Heart left ventricle (tissue), 16 donors: ENCODE measurements at regions of chr17 and their contacts with region 1.

Region 1: DNA sequence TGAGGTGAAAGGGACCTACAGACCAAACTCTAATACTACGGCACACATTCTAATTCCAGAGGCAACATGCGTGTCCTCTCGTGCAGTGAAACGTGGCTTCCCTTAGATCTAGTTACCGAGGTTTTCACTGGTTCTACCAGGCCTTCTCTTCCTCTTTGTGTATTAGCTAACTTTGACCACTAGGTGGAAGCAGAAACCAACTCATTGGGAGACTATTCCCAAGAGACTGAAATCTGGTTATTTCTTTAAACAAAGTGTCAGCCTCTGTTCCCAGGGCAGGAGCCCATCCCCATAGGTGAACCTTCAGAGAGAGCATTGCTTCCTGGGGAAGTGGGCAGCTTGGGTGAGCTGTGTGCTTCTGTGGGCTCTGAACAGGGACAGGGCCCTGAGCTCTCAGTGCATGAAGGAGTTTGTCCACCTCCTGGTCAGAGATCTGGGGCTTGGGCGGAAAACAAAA is 19.7 kb upstream of the RCVRN start:
- DNase-seq: no peak
- ATAC-seq: peak in 3 of 4 donors; percentile 44 to 58 (median 48)
- H3K4me3 ChIP-seq: no peak overlapping the region
- H3K27ac ChIP-seq: no peak overlapping the region
- H3K4me1 ChIP-seq: peaks cover 0 to 8% (median 0%) of the 10 kb centered on the region in 12 donors
- H3K27me3 ChIP-seq: no peaks in the 10 kb centered on the region
- CTCF ChIP-seq: peak; percentile 71 to 93 (median 82)
- POLR2A ChIP-seq: no peak

Region 2: DNA sequence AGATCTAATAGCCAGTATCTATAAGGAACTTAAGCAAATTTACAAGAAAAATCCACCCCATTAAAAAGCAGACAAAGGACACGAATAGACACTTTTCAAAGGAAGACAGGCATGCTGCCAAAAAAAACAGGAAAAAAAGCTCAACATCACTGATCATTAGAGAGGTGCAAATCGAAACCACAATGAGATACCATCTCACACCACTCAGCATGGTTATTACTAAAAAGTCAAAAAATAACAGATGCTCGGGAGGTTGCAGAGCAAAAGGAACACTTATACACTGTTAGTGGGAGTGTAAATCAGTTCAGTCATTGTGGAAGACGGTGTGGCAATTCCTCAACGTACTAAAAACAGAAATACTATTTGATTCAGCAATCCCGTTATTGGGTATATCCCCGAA is 358.7 kb before region 1 on chr17:
- intact Hi-C with region 1: no loop called
- DNase-seq: no peak
- ATAC-seq: no peak
- H3K4me3 ChIP-seq: peak overlapping the region in 1 of 12 donors; percentile 16
- H3K27ac ChIP-seq: no peak overlapping the region
- H3K4me1 ChIP-seq: peaks cover 0 to 14% (median 0%) of the 10 kb centered on the region in 12 donors
- H3K27me3 ChIP-seq: no peaks in the 10 kb centered on the region
- CTCF ChIP-seq: no peak
- POLR2A ChIP-seq: no peak

Region 3: GRCh38 chr17:9824094-9824493 is 100.7 kb before region 1 on chr17:
- intact Hi-C with region 1: no loop called
- DNase-seq: no peak
- ATAC-seq: no peak
- H3K4me3 ChIP-seq: no peak overlapping the region
- H3K27ac ChIP-seq: no peak overlapping the region
- H3K4me1 ChIP-seq: no peaks in the 10 kb centered on the region
- H3K27me3 ChIP-seq: peaks cover 0 to 55% (median 0%) of the 10 kb centered on the region in 9 donors
- CTCF ChIP-seq: no peak
- POLR2A ChIP-seq: no peak

Region 4: DNA sequence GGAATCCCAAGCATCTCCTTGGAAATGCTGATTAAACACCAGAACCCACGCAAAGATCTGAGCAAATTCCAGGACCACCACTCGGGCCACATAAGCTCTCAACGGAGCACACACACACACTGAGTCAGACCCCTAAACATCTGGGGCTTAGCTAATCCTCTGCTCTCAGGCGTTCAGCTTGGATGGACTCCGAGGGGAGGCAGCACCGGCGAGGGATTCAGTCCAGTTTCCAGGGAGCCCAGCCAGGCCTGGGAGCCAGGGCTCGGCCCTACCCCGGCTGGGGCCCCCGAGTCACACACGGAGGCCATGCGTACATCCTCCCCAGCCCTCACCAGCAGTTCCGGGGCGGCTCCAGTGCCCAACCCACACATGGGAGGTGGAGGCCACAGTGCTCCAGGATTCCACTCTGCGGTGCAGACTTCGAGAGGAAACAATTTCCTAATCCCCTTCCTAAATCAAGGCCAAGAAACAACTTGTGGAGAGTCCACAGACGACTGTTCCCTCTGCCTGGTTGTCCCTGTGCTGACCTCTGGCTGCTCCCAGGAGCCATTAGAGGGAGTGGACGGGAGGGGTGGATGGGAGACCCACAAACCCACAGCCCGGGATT is 203.2 kb after region 1 on chr17:
- intact Hi-C with region 1: loop called in 1 of 10 experiments (anchors 10 kb)
- DNase-seq: peak; percentile 82 to 90 (median 85)
- ATAC-seq: peak; percentile 39 to 89 (median 85)
- H3K4me3 ChIP-seq: peak overlapping the region in 1 of 12 donors; percentile 26
- H3K27ac ChIP-seq: peak overlapping the region; percentile 28 to 85 (median 73)
- H3K4me1 ChIP-seq: peaks cover 0 to 60% (median 22%) of the 10 kb centered on the region in 12 donors
- H3K27me3 ChIP-seq: no peaks in the 10 kb centered on the region
- CTCF ChIP-seq: no peak
- POLR2A ChIP-seq: no peak

Region 5: DNA sequence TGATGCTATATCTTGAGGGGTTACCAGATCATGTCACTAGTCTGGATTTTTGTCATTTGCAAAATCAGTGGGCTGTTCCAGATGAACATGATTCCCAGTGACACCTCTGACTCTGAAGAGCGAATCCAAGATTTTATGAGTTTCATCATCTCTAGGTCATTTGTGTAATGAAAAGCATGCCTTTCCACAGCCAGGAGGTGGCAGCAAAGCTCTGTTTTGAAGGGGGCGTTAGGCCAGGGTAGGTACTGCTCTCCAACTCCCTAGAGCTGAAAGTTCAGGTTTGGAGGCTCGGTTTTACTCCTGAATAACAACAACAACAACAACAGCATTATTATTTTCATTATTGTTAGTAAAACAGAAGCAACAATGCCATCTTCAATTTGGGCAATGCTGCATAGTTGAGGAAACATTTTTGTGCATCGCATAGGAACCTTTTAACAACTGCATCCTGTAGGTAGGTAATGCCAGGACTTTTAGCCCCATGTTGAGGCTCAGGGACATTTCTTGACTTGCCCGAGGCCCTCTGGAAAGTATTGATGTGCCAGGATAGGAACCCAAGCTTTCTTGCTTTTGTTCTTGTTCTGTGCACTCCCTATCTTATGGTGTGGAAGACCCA is 371.1 kb after region 1 on chr17:
- intact Hi-C with region 1: loop called in 1 of 10 experiments (anchors 10 kb)
- DNase-seq: peak in 3 of 5 donors; percentile 27 to 48 (median 37)
- ATAC-seq: peak in 3 of 4 donors; percentile 34 to 62 (median 59)
- H3K4me3 ChIP-seq: no peak overlapping the region
- H3K27ac ChIP-seq: no peak overlapping the region
- H3K4me1 ChIP-seq: peaks cover 0 to 10% (median 0%) of the 10 kb centered on the region in 12 donors
- H3K27me3 ChIP-seq: peaks cover 0 to 10% (median 0%) of the 10 kb centered on the region in 9 donors
- CTCF ChIP-seq: peak; percentile 36 to 66 (median 58)
- POLR2A ChIP-seq: no peak

Region 6: DNA sequence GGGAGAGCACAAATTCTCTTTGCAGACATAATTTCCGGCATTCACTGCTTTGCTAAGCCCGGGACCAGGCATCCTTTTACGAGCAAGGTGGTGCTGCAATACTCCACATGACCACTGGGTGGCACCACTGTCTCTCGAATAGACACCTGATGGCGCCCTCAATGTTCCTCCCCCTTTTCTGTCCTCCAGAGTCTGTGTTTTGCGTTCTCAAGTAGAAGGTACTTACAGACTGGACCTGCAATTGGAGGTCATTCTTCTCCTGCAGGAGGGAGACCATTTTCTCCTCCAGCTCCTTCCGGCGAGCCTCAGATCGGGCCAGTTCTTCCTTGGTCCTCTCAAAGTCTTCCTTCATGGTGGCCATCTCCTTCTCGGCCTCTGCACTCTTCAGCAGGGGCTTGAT is 402.9 kb after region 1 on chr17:
- intact Hi-C with region 1: loop called in 2 of 10 experiments (anchors 10 kb)
- DNase-seq: peak; percentile 50 to 81 (median 61)
- ATAC-seq: peak in 3 of 4 donors; percentile 68 to 74 (median 73)
- H3K4me3 ChIP-seq: no peak overlapping the region
- H3K27ac ChIP-seq: no peak overlapping the region
- H3K4me1 ChIP-seq: no peaks in the 10 kb centered on the region
- H3K27me3 ChIP-seq: peaks cover 0 to 5% (median 0%) of the 10 kb centered on the region in 9 donors
- CTCF ChIP-seq: peak; percentile 79 to 95 (median 86)
- POLR2A ChIP-seq: no peak